K562 (cell line): ENCODE measurements at regions of chr1 and their contacts with region 1.

Region 1: GRCh38 chr1:93909146-93910050 is at the start of gene GCLM:
- DNase-seq: peak; percentile 92 to 97 (median 94)
- ATAC-seq: peak; percentile 94
- H3K4me3 ChIP-seq: peak within 1 kb of the TSS; percentile 98
- H3K27ac ChIP-seq: peak within 1 kb of the TSS; percentile 95
- H3K4me1 ChIP-seq: peaks cover 9 to 19% of the 10 kb centered on the region in 2 experiments; a peak in 4 of 5 replicates
- H3K27me3 ChIP-seq: no peaks in the 10 kb centered on the region
- CTCF ChIP-seq: peak; percentile 77 to 99 (median 97)
- EP300 ChIP-seq: peak; percentile 85
- POLR2A ChIP-seq: peak; percentile 77
- RAD21 ChIP-seq: peak; percentile 50 to 60
- polyA plus RNA-seq, gene GCLM: 9.3 to 9.6 TPM

Region 2: GRCh38 chr1:93878889-93879586 is 30.4 kb before region 1 on chr1 and contains the start of gene DNTTIP2:
- CTCF ChIA-PET with region 1: no interaction called
- POLR2A ChIA-PET with region 1: interaction called, 10 read pairs
- in situ Hi-C with region 1: no loop called
- intact Hi-C with region 1: loop called (anchors 2 kb)
- DNase-seq: peak; percentile 74 to 96 (median 82)
- ATAC-seq: peak; percentile 96
- H3K4me3 ChIP-seq: peak within 1 kb of the TSS; percentile 74
- H3K27ac ChIP-seq: peak within 1 kb of the TSS; percentile 86
- H3K4me1 ChIP-seq: peaks cover 7 to 19% of the 10 kb centered on the region in 2 experiments; a peak in 4 of 5 replicates
- H3K27me3 ChIP-seq: no peaks in the 10 kb centered on the region
- CTCF ChIP-seq: no peak
- EP300 ChIP-seq: peak; percentile 7; the same call in 1 of the 2 replicates
- POLR2A ChIP-seq: peak; percentile 97
- RAD21 ChIP-seq: no peak
- polyA plus RNA-seq, gene DNTTIP2: 113 to 138 TPM

Region 3: DNA sequence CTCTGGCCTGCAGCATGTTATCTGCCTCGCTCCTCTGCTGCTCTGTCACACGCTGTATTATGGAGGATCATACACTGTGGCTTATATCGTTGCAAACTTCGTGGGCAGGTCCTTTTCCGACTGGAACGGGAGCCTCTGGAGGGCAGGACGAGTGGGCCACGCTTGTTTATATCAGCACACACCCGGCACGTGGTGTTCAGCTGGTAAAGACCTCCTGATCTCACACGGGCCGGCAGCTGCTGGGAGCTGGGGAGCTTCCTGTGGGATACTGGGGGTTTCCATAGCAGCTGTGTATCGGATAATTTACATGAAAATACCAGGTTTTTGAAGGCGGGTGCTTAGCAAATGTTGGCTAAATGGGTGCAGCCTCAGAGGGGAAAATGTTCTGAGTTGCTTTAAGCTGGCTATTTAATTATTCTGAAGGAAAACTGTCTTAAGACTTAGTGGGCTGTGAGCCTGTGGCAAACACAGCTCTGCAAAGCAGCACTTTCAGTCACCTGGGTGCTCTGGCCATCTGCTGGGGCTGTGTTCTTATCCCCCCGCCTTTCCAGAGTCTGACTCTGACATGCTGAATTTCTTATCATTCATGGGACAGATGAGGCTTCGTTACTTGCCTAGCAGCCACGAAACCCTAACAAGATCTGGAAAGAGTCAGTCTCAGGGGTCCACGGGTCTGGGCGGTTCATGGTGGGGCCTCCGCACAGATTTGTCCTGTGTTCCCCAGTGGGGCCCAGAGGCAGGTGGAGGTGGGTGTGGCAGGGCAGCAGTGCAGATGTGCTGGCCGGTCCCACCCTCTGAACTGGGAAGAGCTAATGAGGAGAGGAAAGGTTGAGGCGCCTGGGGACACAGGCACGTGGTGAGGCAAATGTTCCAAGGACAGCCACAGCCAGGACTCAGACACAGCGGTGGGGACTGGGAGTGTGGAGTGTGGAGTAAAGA is 103.6 kb after region 1 on chr1:
- CTCF ChIA-PET with region 1: no interaction called
- POLR2A ChIA-PET with region 1: no interaction called
- in situ Hi-C with region 1: no loop called
- intact Hi-C with region 1: no loop called
- DNase-seq: no peak
- ATAC-seq: peak; percentile 9; the same call in 2 of the 3 replicates
- H3K4me3 ChIP-seq: no peak overlapping the region
- H3K27ac ChIP-seq: no peak overlapping the region
- H3K4me1 ChIP-seq: peaks cover 4 to 22% of the 10 kb centered on the region in 2 experiments
- H3K27me3 ChIP-seq: peaks cover 0 to 11% of the 10 kb centered on the region in 2 experiments; a peak in 2 of 5 replicates
- CTCF ChIP-seq: no peak
- EP300 ChIP-seq: no peak
- POLR2A ChIP-seq: no peak
- RAD21 ChIP-seq: no peak